ENCODE measurements at regions of chr16 and their contacts with region 1.

Region 1: DNA sequence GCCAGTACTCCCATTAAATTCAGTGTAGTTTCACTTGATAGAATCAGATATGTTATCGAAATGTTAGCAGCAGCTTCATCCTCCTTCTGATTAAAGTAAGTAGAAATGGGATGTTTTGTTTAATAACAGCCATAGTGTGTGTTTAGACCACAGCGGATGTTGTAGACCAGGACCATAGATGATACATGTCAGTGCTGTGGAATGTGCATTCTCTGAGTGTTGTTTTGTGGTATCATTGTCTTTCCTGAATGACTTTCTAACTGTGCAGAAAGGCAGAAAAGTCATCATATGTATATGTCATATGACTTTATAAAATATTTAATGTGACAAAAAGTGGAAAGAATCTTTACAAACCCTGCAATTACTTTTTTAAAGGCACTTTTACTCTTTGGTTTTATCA is 55.6 kb downstream of the CYLD start:
- DNase-seq: no peak
- CTCF ChIP-seq: no peak

Region 2: DNA sequence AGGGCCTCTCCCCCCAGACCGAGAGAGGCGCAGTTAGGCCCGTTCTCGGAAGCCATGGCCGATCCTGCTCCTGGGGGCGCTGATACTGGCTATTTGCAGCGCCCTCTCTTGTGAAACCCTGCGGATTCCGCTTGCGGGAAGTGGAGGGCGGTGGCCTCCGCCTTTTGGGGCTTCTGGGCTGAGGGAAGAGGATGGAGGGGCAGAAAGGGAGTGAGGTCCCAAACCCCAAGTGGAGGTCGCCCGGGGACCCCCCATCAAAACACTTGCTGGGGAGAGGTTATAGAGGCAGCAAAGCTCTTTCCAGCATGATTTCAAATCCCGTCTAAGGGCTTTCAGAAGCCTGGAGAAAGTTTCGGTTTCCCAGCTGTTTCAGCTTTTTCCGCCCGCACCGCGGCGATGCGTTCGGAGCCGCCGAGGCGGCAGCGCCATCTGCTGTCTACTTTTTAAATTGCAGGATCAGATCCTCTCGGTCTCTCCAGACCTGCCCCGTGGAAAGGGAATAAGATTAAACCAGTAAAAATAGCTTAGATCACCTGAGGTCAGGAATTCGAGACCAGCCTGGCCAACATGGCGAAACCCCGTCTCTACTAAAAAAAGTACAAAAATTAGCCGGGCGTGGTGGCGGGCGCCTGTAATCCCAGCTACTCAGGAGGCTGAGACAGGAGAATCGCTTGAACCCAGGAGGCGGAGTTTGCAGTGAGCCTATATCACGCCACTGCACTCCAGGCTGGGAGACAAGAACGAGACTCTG is 132.2 kb before region 1 on chr16:
- in situ Hi-C with region 1: loop called (anchors 5 kb)
- DNase-seq: peak; percentile 80
- CTCF ChIP-seq: peak; percentile 73

Measured in GM13976 (cell line).